PC-9 (cell line): ENCODE measurements at regions of chr19 and their contacts with region 1.

Region 1: GRCh38 chr19:32339988-32340874 is 5.2 kb upstream of the ZNF507 start:
- DNase-seq: peak in 1 of 2 experiments; percentile 47
- H3K4me3 ChIP-seq: no peak overlapping the region
- H3K27ac ChIP-seq: no peak overlapping the region
- H3K4me1 ChIP-seq: peaks cover 18% of the 10 kb centered on the region
- H3K27me3 ChIP-seq: no peaks in the 10 kb centered on the region
- CTCF ChIP-seq: peak; percentile 73

Region 2: GRCh38 chr19:32287811-32288227 is 52.4 kb before region 1 on chr19:
- CTCF ChIA-PET with region 1: no interaction called
- POLR2A ChIA-PET with region 1: no interaction called
- intact Hi-C with region 1: no loop called
- DNase-seq: peak in 1 of 2 experiments; percentile 35
- H3K4me3 ChIP-seq: no peak overlapping the region
- H3K27ac ChIP-seq: no peak overlapping the region
- H3K4me1 ChIP-seq: no peaks in the 10 kb centered on the region
- H3K27me3 ChIP-seq: peaks cover 72% of the 10 kb centered on the region
- CTCF ChIP-seq: peak; percentile 54; the same call in 1 of the 2 replicates

Region 3: DNA sequence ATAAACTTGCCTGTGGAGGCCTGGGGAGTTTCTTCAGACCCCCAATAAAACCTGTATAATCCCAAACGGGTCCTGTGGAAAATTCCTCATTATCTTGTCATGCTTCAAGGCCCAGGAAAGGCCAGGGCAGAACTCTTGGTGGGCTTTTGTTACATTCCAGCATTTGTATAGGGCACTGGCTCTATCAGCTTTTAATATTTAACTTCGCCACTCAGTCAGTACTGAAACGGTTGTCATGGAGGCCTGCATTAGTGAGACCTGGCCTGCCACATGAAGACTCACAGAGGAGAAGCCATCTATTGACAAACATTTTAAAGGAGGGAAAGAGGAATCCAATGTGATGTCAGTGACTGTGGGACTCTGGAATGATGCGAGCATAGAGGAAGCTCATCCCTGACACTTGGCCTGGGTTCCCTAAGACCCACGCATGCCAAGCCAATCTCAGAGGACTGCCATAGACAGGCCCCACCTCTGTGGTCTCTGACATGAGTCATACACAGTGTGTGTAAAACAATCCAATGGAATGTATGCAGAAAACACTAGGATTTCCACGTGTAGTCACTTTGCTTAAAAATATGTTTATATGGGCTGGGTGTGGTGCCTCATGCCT is 57.4 kb after region 1 on chr19:
- CTCF ChIA-PET with region 1: no interaction called
- POLR2A ChIA-PET with region 1: interaction called, 27 read pairs
- intact Hi-C with region 1: no loop called
- DNase-seq: peak in 1 of 2 experiments; percentile 16
- H3K4me3 ChIP-seq: no peak overlapping the region
- H3K27ac ChIP-seq: no peak overlapping the region
- H3K4me1 ChIP-seq: no peaks in the 10 kb centered on the region
- H3K27me3 ChIP-seq: no peaks in the 10 kb centered on the region
- CTCF ChIP-seq: no peak

Region 4: GRCh38 chr19:32469795-32470194 is 129.6 kb after region 1 on chr19:
- CTCF ChIA-PET with region 1: no interaction called
- POLR2A ChIA-PET with region 1: no interaction called
- intact Hi-C with region 1: loop called (anchors 5 kb)
- DNase-seq: no peak
- H3K4me3 ChIP-seq: no peak overlapping the region
- H3K27ac ChIP-seq: no peak overlapping the region
- H3K4me1 ChIP-seq: no peaks in the 10 kb centered on the region
- H3K27me3 ChIP-seq: no peaks in the 10 kb centered on the region
- CTCF ChIP-seq: no peak